SK-N-SH (cell line): ENCODE measurements at regions of chr1 and their contacts with region 1.

Region 1: GRCh38 chr1:85307987-85308832 is 31.8 kb upstream of the BCL10 start:
- DNase-seq: peak; percentile 83
- H3K4me3 ChIP-seq: peak overlapping the region in 1 of 2 experiments; percentile 10; a peak in 1 of 4 replicates
- H3K27ac ChIP-seq: peak overlapping the region in 1 of 2 experiments; percentile 28; a peak in 3 of 4 replicates
- H3K4me1 ChIP-seq: peaks cover 6 to 7% of the 10 kb centered on the region in 2 experiments; a peak in 2 of 4 replicates
- H3K27me3 ChIP-seq: no peaks in the 10 kb centered on the region
- CTCF ChIP-seq: peak; percentile 99
- EP300 ChIP-seq: peak in 1 of 2 experiments; percentile 26; a peak in 1 of 4 replicates
- RAD21 ChIP-seq: peak; percentile 100

Region 2: DNA sequence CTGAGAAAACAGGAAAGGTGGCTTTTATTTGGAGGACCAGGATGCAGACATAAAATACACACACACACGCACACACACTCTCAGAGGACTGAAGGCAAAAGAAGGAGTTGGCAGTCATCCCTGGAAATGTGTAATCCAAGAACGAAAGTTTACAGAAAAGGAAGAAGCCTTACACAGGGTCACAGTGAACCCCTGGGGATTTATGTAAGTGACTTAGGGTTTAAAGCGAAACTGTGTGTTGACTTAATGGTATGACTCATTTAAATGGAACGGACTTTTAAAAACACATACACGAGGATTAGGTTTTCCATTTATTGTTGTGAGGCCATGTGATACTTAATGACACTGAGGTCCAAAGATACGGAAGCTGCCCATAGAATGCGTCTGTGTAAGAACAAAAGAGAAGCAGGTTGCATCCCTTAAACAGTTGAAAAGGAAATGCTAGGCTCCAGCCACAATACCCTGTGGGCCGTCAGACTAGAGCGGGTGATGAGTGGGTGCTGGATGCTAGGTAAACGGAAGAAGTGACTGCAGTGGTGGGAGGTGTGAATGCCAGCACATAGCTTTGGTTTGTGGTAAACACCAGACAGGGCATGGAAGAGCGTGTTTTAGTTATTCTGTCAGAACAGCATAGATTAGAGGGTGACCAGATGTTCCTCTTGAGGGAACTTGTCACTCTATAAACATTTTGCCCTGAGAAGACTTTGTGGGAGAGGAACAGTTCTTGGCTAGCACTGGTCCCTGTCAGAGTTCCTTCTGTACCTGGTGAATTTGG is 10.2 kb before region 1 on chr1:
- CTCF ChIA-PET with region 1: interaction called, 24 read pairs
- POLR2A ChIA-PET with region 1: no interaction called
- DNase-seq: no peak
- H3K4me3 ChIP-seq: peak overlapping the region in 1 of 2 experiments; percentile 7; a peak in 1 of 4 replicates
- H3K27ac ChIP-seq: peak overlapping the region; percentile 1 to 73; a peak in 3 of 4 replicates
- H3K4me1 ChIP-seq: peaks cover 0 to 17% of the 10 kb centered on the region in 2 experiments; a peak in 2 of 4 replicates
- H3K27me3 ChIP-seq: no peaks in the 10 kb centered on the region
- CTCF ChIP-seq: no peak
- EP300 ChIP-seq: peak in 1 of 2 experiments; percentile 7; a peak in 1 of 4 replicates
- RAD21 ChIP-seq: no peak

Region 3: DNA sequence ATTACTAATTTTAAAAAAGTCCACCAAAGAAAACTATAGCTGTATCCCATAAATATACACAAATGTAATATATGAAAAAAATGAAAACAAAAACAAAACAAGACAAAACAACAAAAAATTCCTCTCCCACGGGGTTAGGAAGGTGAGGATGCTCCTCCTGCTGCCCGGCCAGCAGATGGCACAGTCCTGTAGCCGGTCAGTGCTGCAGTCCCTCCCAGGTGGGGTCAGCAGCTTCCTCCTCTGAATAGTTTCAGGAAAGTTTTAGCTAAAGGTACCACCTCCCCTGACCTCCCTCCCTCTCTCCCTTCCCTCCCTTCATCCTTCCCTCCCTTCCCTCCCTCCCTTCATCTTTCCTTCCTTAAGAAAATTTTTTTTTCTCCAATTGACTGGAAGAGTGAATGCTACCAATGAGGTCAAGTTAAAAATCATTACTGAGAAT is 36.1 kb after region 1 on chr1:
- CTCF ChIA-PET with region 1: interaction called, 15 read pairs
- POLR2A ChIA-PET with region 1: no interaction called
- DNase-seq: peak; percentile 42
- H3K4me3 ChIP-seq: no peak overlapping the region
- H3K27ac ChIP-seq: peak overlapping the region; percentile 70 to 98; a peak in 3 of 4 replicates
- H3K4me1 ChIP-seq: peaks cover 2 to 58% of the 10 kb centered on the region in 2 experiments
- H3K27me3 ChIP-seq: no peaks in the 10 kb centered on the region
- CTCF ChIP-seq: peak; percentile 82
- EP300 ChIP-seq: no peak
- RAD21 ChIP-seq: peak; percentile 65

Region 4: GRCh38 chr1:85502625-85503083 is 194.4 kb after region 1 on chr1:
- CTCF ChIA-PET with region 1: interaction called, 35 read pairs
- POLR2A ChIA-PET with region 1: no interaction called
- DNase-seq: peak; percentile 48
- H3K4me3 ChIP-seq: no peak overlapping the region
- H3K27ac ChIP-seq: peak overlapping the region in 1 of 2 experiments; percentile 62; a peak in 1 of 4 replicates
- H3K4me1 ChIP-seq: peaks cover 9 to 14% of the 10 kb centered on the region in 2 experiments
- H3K27me3 ChIP-seq: no peaks in the 10 kb centered on the region
- CTCF ChIP-seq: peak; percentile 58
- EP300 ChIP-seq: no peak
- RAD21 ChIP-seq: peak; percentile 74

Region 5: DNA sequence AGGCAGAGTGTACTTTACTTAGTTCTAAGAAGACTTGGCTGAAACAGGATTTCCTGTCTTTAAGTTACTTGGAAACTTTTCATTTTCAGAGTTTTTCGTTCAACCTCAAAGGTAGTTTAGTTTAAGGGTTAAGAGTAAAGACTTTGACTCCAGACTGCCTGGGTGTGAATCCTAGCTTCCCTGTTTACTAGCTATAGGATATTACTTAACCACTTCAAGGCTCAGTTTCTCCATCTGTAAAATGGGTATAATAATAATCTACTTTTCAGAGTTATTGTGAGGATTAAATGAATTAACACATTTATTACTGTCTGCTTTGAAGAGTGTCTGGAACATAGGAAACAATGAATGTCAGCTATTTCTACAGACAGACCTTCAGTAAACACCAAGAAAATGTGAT is 370.0 kb after region 1 on chr1:
- CTCF ChIA-PET with region 1: interaction called, 19 read pairs
- POLR2A ChIA-PET with region 1: no interaction called
- DNase-seq: no peak
- H3K4me3 ChIP-seq: no peak overlapping the region
- H3K27ac ChIP-seq: no peak overlapping the region
- H3K4me1 ChIP-seq: no peaks in the 10 kb centered on the region
- H3K27me3 ChIP-seq: no peaks in the 10 kb centered on the region
- CTCF ChIP-seq: no peak
- EP300 ChIP-seq: no peak
- RAD21 ChIP-seq: no peak

Region 6: DNA sequence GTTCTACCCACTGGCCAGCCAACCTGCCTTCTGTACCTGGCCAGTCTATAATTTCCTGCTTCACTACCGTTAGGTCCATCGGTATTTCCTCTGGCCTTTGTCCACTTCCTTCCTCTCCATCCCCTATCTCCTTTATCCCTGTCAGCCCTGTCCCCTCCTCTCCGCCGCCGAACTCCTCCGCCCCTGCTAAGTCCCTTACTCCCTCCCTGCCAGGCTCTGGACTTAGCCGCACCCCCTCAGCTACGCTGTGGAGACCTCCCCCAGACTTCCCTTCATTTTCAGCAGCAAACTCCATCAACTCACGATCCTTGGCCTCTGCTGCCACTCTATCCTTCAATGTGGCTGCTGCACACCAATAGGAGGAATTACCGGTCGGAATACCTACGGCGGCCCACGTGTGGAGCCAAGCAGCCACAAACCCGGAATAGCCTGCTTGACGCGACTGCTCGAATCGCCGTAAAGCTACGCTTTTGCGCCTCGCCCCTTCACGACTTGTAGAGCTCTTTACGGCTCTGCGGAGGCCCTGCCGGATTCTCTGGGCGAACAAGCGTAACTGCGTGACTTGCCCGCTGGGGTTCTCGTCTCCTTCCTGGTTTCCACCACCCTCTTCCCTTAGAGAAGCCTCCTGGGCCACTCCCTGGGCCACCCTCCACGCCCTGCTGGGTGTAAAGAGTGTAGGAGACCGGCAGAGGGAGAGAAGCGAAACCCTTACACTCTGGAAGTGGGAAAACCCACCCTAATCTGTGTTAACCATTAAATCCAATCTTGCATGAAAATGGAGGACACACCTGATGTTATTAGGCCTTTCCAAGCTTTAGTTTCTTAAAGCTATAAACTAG is 400.0 kb after region 1 on chr1 and contains the start of gene ZNHIT6:
- CTCF ChIA-PET with region 1: interaction called, 15 read pairs
- POLR2A ChIA-PET with region 1: no interaction called
- DNase-seq: peak; percentile 77
- H3K4me3 ChIP-seq: peak within 1 kb of the TSS; percentile 71 to 97
- H3K27ac ChIP-seq: peak within 1 kb of the TSS; percentile 78 to 95
- H3K4me1 ChIP-seq: peaks cover 0 to 12% of the 10 kb centered on the region in 2 experiments; a peak in 2 of 4 replicates
- H3K27me3 ChIP-seq: no peaks in the 10 kb centered on the region
- CTCF ChIP-seq: peak; percentile 40
- EP300 ChIP-seq: no peak; a peak in 1 of 4 replicates
- RAD21 ChIP-seq: peak; percentile 18; the same call in 1 of the 2 replicates
- polyA plus RNA-seq, gene ZNHIT6: 7.7 and 10.1 TPM in 2 replicates